Sigmoid colon (tissue), 7 donors: ENCODE measurements at regions of chr9 and their contacts with region 1.

Region 1: GRCh38 chr9:94993064-94993833 is 266.8 kb downstream of the AOPEP start:
- DNase-seq: no peak
- H3K4me3 ChIP-seq: no peak overlapping the region
- H3K27ac ChIP-seq: peak overlapping the region in 1 of 4 donors; percentile 99
- H3K4me1 ChIP-seq: peaks cover 0 to 24% (median 16%) of the 10 kb centered on the region in 4 donors
- H3K27me3 ChIP-seq: no peaks in the 10 kb centered on the region
- CTCF ChIP-seq: no peak
- EP300 ChIP-seq: no peak
- POLR2A ChIP-seq: no peak

Region 2: DNA sequence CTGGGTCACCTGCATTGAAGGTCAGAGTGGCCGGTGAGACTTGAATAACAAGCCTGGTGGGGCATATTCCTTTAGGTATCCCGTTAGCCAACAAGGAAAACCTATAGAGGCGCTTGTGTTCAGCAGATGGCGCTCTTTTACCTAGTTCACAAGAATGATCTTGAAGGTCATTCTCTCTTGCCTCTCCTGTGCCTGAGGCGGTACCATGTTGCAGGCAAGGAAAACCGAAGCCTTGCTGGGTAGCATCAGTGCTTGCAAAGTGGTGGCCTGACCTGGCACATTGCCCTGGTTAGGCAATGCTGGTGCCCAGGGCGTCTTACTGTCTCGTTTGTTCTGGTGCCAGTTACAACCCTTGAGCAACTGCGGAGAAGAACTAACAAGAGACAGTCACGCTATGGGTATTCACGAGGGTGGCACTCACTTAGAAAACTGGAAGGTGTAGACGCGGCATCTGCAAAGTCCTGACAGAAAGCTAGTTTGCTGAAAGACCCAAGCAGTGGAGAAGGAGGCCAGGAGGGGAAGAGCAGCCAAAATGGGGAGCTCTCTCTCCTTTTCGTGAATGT is 210.1 kb before region 1 on chr9:
- intact Hi-C with region 1: loop called (anchors 5 kb)
- DNase-seq: peak; percentile 96
- H3K4me3 ChIP-seq: no peak overlapping the region
- H3K27ac ChIP-seq: peak overlapping the region in 3 of 4 donors; percentile 21 to 69 (median 51)
- H3K4me1 ChIP-seq: peaks cover 0 to 10% (median 6%) of the 10 kb centered on the region in 4 donors
- H3K27me3 ChIP-seq: no peaks in the 10 kb centered on the region
- CTCF ChIP-seq: peak; percentile 50 to 63 (median 58)
- EP300 ChIP-seq: peak in 2 of 4 donors; percentile 4 to 54
- POLR2A ChIP-seq: no peak

Region 3: DNA sequence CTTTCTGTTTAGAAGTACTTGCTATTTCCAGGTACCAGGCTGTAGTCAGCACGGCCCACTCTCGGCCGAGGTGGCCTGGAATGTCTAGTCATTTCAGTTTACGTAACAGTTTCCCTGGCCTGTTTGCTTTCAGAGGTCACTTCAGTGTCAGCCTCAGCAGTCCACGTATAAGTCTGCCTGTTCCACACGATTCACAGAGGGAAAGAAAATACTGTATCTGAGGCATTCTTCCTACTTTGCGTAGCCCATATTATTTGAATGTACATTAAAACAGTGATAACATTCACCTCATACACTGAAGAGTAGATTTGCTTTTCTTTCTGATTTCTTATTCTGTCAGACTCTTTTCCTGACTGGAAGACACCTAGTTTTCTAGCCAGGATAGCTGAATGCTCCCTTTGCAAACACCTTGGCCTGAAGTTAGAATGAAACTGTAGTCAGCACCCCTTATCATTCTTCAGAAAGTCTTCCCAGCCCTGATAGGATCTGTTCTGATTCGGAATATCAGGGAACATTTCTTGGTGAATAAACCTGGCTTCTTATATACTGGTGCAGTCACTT is 125.9 kb before region 1 on chr9:
- intact Hi-C with region 1: loop called (anchors 5 kb)
- DNase-seq: peak; percentile 86
- H3K4me3 ChIP-seq: peak overlapping the region in 2 of 4 donors; percentile 2 to 10
- H3K27ac ChIP-seq: peak overlapping the region; percentile 74 to 88 (median 82)
- H3K4me1 ChIP-seq: peaks cover 0 to 64% (median 53%) of the 10 kb centered on the region in 4 donors
- H3K27me3 ChIP-seq: no peaks in the 10 kb centered on the region
- CTCF ChIP-seq: no peak
- EP300 ChIP-seq: peak in 1 of 4 donors; percentile 33
- POLR2A ChIP-seq: no peak

Region 4: DNA sequence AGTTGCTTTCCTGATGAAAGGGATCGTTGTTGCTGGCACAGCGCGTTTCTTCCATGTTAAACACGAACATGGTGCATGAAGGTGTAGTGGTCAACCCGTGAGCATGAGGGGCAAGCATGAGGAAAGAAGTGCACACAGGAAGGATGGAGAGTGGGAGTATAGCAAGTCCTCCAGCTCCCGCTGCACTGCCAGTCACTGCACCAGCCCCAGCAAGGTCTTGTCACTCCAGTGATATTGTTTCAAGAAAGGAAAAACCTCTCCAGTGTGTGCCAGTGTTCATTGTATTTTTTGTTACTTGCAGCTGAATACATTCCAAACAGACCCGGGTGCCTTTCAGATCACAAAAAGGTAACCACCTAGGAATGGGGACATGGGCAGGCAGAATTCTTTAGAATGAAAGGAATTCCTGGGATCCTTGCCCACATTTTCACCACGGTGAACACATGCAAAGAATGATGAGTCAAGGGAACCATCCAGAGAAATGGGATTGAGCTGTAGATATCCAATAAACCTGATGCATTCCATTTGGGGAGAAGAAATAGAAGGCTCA is 80.5 kb before region 1 on chr9:
- intact Hi-C with region 1: loop called (anchors 5 kb)
- DNase-seq: no peak
- H3K4me3 ChIP-seq: no peak overlapping the region
- H3K27ac ChIP-seq: peak overlapping the region in 2 of 4 donors; percentile 59 to 72
- H3K4me1 ChIP-seq: peaks cover 0 to 36% (median 25%) of the 10 kb centered on the region in 4 donors
- H3K27me3 ChIP-seq: no peaks in the 10 kb centered on the region
- CTCF ChIP-seq: no peak
- EP300 ChIP-seq: no peak
- POLR2A ChIP-seq: no peak

Region 5: DNA sequence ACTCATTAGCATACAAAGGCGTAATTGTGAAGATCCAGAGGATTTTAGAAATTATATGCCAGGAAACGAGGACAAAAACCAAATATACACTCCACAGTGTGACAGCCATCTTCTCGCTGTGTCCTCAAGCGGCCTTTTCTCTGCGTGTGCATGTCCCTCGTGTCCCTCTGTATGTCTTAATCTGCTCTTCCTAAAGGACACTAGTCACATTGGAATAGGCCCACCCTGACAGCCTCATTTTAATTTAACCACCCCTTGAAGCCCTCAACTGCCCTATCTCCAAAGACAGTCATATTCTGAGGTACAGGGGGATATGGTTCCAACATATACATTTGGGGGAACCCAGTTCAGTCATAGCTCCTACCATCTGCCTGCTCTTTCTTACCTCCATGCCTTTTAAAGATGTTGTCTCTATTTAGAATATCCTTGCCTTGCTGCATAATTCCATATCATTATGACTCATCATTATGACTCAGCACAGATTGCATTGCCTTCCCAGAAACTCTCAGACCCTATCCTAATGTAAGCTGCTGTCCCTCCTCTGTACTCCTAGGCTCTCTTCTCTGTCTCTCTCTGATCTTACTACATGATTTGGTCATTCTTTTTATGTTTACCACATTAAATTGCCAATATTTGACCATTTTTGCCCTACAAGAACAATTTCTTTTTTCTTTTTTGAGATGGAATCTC is 55.9 kb before region 1 on chr9:
- intact Hi-C with region 1: loop called (anchors 5 kb)
- DNase-seq: no peak
- H3K4me3 ChIP-seq: no peak overlapping the region
- H3K27ac ChIP-seq: peak overlapping the region in 2 of 4 donors; percentile 25 to 64
- H3K4me1 ChIP-seq: peaks cover 0 to 32% (median 26%) of the 10 kb centered on the region in 4 donors
- H3K27me3 ChIP-seq: no peaks in the 10 kb centered on the region
- CTCF ChIP-seq: no peak
- EP300 ChIP-seq: no peak
- POLR2A ChIP-seq: no peak